Activated naive CD4-positive, alpha-beta T cell treated with anti-CD3 and anti-CD28 coated beads, Interleukin-2, amount 10 ng/mL, durations not matched to agents 7 days and 5 days (primary cell): ENCODE measurements at regions of chr19 and their contacts with region 1.

Region 1: DNA sequence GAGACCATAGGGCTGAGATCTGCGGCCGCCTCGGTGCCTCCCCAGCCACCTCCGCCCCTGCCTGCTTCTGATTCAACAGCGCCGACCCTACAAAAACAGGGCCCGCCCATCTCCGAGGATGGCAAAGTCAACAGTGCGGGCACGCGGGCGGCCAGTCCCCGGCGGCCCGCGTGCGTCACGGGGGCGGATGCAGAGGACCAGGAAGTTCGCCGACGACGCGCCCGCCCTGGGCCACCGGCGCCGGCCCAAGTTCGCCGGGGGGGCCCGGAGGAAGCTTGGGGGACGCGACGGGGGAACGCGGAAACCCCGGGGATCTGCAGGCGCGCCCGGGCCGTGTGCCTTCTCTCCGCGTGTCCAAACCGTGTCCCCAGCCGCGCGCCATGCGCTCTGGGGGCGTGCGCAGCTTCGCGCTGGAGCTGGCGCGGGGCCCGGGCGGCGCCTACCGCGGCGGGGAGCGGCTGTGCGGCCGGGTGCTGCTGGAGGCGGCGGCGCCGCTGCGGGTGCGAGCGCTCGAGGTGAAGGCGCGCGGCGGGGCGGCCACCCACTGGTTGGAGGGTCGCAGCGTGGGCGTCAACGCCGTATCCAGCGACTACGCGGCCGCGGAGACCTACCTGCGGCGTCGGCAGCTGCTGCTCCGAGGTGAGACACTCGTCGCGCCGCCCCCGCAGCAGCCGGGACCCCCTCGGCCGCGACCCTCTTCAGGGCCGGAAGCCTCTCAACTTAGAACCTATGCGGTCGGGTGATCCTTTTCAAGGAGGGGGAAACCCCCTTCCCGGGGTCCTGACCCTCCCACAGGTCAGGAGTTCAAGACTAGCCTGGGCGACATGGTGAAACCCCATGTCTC is 6.8 kb upstream of the ARRDC2 start:
- DNase-seq: peak; percentile 95
- H3K4me3 Mint-ChIP-seq: peak overlapping the region; percentile 74
- H3K27ac Mint-ChIP-seq: peak overlapping the region; percentile 97
- H3K4me1 Mint-ChIP-seq: peaks cover 33% of the 10 kb centered on the region
- H3K27me3 Mint-ChIP-seq: peaks cover 5% of the 10 kb centered on the region

Region 2: DNA sequence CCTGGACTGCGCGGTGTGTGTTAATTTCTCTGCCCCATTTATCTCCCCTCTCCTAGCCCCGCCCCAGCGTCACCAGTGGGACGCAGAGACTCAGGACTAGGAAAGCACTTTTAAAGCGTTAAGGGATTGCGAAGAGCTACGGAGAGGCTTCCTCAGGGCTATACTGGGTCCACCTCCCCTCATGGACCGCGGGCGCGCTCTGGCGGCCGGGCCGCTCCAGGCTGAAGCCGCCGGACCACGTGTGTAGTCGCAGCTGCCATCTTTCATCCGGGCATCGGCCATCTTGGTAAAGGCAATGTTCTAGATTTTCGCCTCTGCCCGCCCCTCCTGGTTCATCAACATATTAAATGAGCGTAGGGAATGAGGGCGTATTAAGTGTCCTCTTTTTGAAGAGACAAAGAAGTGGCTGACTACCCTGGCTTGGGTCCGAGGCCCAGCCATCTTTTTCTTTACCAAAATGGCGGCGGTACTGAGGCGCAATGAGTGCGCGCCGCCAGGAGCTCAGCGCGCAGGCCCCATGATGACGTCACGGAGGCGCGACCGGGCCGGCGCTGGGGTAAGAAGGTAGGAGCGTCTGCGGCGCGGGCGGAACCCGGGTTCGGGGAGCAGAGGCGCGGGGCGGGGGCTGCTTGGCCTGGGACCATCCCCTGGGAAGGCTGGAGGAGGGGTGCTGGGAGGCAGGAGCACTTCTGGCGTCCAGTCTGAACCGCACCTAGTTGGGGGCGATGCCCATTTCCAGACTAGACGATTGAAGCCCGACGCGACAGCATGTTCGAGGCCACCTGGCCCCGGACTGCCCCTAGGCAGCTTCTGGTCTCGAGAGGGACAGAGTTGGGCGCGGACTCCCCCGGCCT is 68.4 kb before region 1 on chr19 and contains the start of gene CCDC124:
- CTCF ChIA-PET with region 1: interaction called, 216 read pairs
- DNase-seq: peak; percentile 96
- H3K4me3 Mint-ChIP-seq: peak within 1 kb of the TSS; percentile 88
- H3K27ac Mint-ChIP-seq: peak within 1 kb of the TSS; percentile 89
- H3K4me1 Mint-ChIP-seq: peaks cover 22% of the 10 kb centered on the region
- H3K27me3 Mint-ChIP-seq: peaks cover 6% of the 10 kb centered on the region

Region 3: GRCh38 chr19:17947815-17948513 is 53.2 kb before region 1 on chr19:
- CTCF ChIA-PET with region 1: interaction called, 73 read pairs
- DNase-seq: peak; percentile 94
- H3K4me3 Mint-ChIP-seq: peak overlapping the region; percentile 74
- H3K27ac Mint-ChIP-seq: no peak overlapping the region
- H3K4me1 Mint-ChIP-seq: peaks cover 51% of the 10 kb centered on the region
- H3K27me3 Mint-ChIP-seq: peaks cover 50% of the 10 kb centered on the region

Region 4: DNA sequence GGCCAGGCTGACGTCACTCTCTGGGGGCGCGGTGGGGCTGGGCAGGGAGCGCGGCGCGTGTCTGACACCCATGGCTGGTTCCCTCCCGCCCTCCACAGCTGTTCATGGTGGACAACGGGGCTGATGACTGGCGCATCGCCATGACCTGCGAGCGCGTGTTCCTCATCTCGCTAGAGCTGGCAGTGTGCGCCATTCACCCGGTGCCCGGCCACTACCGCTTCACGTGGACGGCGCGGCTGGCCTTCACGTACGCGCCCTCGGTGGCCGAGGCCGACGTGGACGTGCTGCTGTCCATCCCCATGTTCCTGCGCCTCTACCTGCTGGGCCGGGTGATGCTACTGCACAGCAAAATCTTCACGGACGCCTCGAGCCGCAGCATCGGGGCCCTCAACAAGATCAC is 19.5 kb before region 1 on chr19:
- CTCF ChIA-PET with region 1: no interaction called
- DNase-seq: no peak
- H3K4me3 Mint-ChIP-seq: no peak overlapping the region
- H3K27ac Mint-ChIP-seq: no peak overlapping the region
- H3K4me1 Mint-ChIP-seq: peaks cover 4% of the 10 kb centered on the region
- H3K27me3 Mint-ChIP-seq: peaks cover 47% of the 10 kb centered on the region